Heart left ventricle (tissue), 16 donors: ENCODE measurements at regions of chr18 and their contacts with region 1.

Region 1: DNA sequence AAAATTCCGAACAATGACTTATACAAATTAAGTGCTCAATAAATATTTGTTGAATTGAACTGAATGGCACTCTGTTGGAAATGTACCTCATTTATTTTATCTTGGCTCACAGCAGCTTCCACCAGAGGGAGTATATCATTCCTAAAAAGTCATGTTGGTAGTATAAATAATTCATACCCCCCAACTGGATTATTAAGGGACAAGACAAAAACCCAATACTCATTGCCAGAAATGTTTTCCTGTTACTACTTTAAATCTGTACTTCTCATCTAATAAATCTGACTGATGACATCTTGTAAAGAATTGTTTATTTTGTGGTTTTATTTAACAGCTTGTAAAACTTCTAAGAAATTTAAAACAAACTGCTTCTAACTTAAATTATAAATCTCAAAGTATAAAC is 163.9 kb downstream of the CDH2 start:
- DNase-seq: no peak
- ATAC-seq: no peak
- H3K4me3 ChIP-seq: no peak overlapping the region
- H3K27ac ChIP-seq: no peak overlapping the region
- H3K4me1 ChIP-seq: peaks cover 0 to 34% (median 1%) of the 10 kb centered on the region in 12 donors
- H3K27me3 ChIP-seq: no peaks in the 10 kb centered on the region
- CTCF ChIP-seq: peak in 6 of 12 donors; percentile 7 to 41 (median 36)
- POLR2A ChIP-seq: no peak

Region 2: DNA sequence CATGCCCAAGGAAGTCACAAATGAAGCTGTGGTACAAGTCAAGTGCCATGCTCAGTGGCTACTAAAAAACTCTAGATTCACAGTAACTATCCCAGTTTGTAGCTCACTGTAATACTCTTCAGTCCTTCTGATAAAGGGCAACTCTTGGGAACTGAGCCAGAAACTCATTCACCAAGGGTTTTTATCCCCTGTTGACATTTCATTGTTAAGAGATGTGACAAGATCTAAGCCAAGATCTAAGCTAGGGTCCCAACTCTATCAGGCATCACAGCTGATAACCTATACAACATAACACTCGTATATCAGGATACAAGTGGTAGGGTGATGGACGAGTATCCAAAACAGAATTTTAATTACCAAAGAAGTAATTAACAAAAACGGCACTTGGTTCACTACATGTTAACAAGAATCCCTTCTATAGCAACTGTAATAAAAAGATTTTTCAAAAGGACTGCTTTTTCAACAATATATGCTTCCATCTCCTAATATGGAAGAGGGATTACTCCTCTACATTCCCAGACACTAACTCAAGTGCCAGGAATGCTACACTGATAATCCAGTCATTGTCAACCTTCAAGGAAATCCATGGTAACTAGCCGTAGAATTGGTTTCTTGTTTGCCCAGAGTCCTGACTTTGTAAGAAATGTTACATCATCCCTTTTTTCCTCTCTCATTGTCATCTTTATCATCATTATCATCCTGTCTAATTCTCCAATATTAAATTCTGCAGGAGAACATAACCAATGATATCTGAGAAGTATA is 52.1 kb after region 1 on chr18:
- intact Hi-C with region 1: loop called in 1 of 10 experiments (anchors 10 kb)
- DNase-seq: no peak
- ATAC-seq: peak in 2 of 4 donors; percentile 26 to 31
- H3K4me3 ChIP-seq: no peak overlapping the region
- H3K27ac ChIP-seq: peak overlapping the region in 8 of 12 donors; percentile 10 to 72 (median 23)
- H3K4me1 ChIP-seq: peaks cover 0 to 32% (median 5%) of the 10 kb centered on the region in 12 donors
- H3K27me3 ChIP-seq: no peaks in the 10 kb centered on the region
- CTCF ChIP-seq: no peak
- POLR2A ChIP-seq: no peak

Region 3: DNA sequence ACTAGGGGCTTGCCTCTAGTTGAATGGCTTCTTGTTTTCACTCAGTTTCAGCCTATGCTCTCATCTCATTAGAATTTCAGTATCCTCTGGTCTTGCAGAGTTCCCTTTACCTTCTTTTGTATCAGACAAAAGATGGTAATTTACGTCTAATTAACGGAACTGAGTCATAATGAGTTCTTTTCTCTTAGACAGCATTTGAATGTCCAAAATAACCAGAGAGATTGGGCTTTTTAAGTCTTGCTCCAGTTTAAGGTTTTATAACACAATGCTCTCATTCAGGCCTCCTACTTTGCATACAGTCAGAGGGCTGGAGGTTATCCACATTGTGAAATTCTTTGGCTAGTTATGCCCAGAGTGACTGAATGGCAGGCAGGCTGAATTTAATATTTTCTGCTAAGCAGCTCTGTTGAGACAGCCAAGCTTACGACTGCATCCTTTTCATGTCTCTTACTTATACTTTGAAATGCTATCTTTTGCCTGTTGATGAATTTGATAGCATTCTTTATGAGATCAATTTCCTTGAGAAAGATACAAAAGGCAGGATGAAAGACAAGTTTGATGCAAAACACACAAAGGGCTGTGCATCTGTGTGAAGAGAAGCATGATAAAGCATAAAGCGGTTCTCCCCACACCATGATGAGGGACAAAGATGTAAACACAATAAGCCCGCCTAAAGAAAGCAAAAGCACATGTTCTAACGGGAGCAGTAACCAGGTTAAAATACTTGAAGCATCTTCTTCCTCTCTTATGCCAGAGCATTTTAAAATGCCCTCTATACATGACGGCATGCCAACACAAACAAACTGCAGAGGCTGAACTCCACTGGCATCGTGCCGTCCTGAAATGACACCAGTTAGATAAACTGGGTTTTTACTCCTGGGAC is 73.8 kb after region 1 on chr18:
- intact Hi-C with region 1: loop called in 1 of 10 experiments (anchors 10 kb)
- DNase-seq: peak in 2 of 5 donors; percentile 40 to 56
- ATAC-seq: peak; percentile 40 to 80 (median 74)
- H3K4me3 ChIP-seq: no peak overlapping the region
- H3K27ac ChIP-seq: peak overlapping the region in 7 of 12 donors; percentile 5 to 52 (median 27)
- H3K4me1 ChIP-seq: peaks cover 0 to 83% (median 26%) of the 10 kb centered on the region in 12 donors
- H3K27me3 ChIP-seq: no peaks in the 10 kb centered on the region
- CTCF ChIP-seq: no peak
- POLR2A ChIP-seq: no peak

Region 4: DNA sequence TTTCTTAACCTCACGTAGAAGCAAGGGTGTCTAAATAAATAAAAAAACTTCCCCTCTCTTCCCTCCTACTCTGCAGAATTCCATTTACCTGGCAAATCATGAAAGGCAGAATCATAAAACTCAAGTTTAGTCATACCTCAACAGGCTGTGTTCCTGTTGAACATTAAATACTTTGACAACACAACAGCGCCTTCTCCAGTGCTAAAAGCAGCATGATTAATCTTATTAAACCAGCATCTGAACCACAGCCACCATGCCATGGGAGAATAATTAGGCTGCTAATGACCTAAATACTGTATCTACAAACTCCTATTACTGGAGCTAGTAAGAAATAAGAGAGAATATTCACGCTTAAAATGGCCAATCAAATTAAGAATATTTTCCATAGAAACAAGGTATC is 95.7 kb after region 1 on chr18:
- intact Hi-C with region 1: loop called in 1 of 10 experiments (anchors 5 kb)
- DNase-seq: no peak
- ATAC-seq: peak in 2 of 4 donors; percentile 20 to 30
- H3K4me3 ChIP-seq: no peak overlapping the region
- H3K27ac ChIP-seq: peak overlapping the region in 10 of 12 donors; percentile 53 to 97 (median 86)
- H3K4me1 ChIP-seq: peaks cover 0 to 44% (median 13%) of the 10 kb centered on the region in 12 donors
- H3K27me3 ChIP-seq: no peaks in the 10 kb centered on the region
- CTCF ChIP-seq: peak in 4 of 12 donors; percentile 6 to 24 (median 20)
- POLR2A ChIP-seq: no peak

Region 5: GRCh38 chr18:28288784-28289183 is 275.7 kb after region 1 on chr18:
- intact Hi-C with region 1: no loop called
- DNase-seq: no peak
- ATAC-seq: no peak
- H3K4me3 ChIP-seq: no peak overlapping the region
- H3K27ac ChIP-seq: no peak overlapping the region
- H3K4me1 ChIP-seq: no peaks in the 10 kb centered on the region
- H3K27me3 ChIP-seq: no peaks in the 10 kb centered on the region
- CTCF ChIP-seq: no peak
- POLR2A ChIP-seq: no peak